MCF 10A (cell line): ENCODE measurements at regions of chr2 and their contacts with region 1.

Region 1: DNA sequence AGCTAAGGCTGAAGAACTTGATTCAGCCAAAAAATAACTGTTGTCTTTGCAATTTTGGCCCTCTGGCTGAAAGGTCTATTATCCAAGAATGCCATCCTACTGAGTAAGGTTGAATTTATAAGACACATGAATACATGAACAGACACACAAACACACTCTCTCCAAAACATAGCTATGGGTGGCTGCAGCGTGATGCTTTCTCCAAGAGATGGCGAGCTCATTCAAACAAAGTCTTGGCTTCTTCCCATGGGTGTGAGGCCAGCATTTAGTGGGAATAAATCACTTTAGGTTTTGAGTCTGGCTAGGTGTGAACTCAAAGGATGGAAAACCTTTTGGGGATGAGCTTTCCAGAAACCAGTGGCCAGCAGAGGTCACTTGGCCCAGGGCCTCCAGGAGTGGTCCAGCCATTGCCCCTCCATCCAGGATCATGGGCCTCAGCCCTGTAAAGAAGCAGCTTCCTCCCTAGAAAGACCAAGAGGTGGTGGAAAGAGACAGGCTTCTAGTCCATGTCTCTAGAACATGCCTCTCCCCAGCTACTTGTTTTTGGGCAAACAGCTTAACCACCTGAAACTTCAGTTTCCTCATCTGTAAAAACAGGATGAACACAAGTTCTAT is 11.0 kb upstream of the OSR1 start:
- DNase-seq: peak; percentile 70
- H3K4me3 Mint-ChIP-seq: no peak overlapping the region
- H3K27ac Mint-ChIP-seq: no peak overlapping the region
- H3K4me1 Mint-ChIP-seq: no peaks in the 10 kb centered on the region
- H3K27me3 Mint-ChIP-seq: no peaks in the 10 kb centered on the region
- CTCF ChIP-seq: peak; percentile 71

Region 2: DNA sequence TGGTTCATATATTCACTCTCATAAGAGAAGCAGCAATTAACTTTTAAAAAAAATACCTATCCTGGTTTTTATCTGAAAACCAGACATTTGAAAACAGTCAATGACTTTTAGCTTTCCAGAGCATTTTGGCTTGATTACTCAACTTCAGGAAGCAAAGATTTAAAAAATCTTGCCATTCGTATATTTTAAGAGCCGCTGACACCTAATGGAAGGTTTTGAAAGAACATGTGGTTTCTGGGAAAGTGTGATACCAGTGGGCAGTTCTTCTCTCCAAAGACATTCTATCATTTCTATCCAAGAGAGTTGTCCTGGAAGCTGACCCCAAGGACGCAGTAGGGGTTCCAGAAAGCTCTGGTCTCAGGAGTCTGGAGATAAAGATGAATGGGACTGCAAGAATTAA is 297.6 kb after region 1 on chr2:
- CTCF ChIA-PET with region 1: interaction called, 62 read pairs
- POLR2A ChIA-PET with region 1: interaction called, 4 read pairs
- intact Hi-C with region 1: loop called (anchors 1 kb)
- DNase-seq: peak; percentile 59
- H3K4me3 Mint-ChIP-seq: no peak overlapping the region
- H3K27ac Mint-ChIP-seq: no peak overlapping the region
- H3K4me1 Mint-ChIP-seq: no peaks in the 10 kb centered on the region
- H3K27me3 Mint-ChIP-seq: no peaks in the 10 kb centered on the region
- CTCF ChIP-seq: peak; percentile 60

Region 3: DNA sequence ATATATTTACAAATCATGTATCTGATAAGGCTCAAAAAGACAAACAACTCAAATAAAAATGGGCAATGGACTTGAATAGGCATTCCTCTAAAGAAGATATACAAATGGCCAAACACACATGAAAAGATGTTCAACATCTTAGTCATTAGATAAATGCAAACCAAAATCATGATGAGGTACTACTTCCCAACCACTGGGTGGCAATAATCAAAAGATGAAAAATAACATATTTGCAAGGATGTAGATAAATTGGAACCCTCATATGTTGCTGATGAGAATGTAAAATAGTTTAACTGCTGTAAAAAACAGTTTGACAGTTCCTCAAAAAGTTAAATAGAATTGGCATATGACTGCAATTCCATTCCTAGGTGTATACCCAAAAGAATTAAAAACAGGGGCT is 400.1 kb after region 1 on chr2:
- CTCF ChIA-PET with region 1: interaction called, 10 read pairs
- POLR2A ChIA-PET with region 1: no interaction called
- intact Hi-C with region 1: no loop called
- DNase-seq: peak; percentile 42
- H3K4me3 Mint-ChIP-seq: no peak overlapping the region
- H3K27ac Mint-ChIP-seq: no peak overlapping the region
- H3K4me1 Mint-ChIP-seq: peaks cover 2% of the 10 kb centered on the region
- H3K27me3 Mint-ChIP-seq: no peaks in the 10 kb centered on the region
- CTCF ChIP-seq: peak; percentile 19